Heart right ventricle (tissue), 16 donors: ENCODE measurements at regions of chr6 and their contacts with region 1.

Region 1: DNA sequence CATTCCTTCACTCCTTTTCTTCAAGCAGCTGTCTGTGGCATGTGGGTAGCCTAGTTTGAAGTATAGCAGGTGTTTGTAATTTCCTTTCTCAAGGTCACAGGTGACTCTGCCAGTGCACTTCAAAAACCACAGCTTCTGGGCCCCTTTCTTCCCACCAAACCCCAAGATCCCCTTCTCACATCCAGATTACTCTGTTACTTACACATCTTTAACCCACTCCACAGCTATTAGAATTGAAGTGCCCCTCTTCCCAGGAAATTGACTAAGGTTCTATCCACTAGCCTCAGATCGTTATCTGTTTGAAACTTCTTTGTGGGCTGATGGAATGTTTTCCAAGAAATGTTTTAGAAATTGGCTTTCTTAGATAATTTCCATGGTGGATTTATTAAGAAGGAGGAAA is 150.8 kb downstream of the AHI1 start:
- DNase-seq: no peak
- ATAC-seq: no peak
- H3K4me3 ChIP-seq: no peak overlapping the region
- H3K27ac ChIP-seq: no peak overlapping the region
- H3K4me1 ChIP-seq: no peaks in the 10 kb centered on the region
- H3K27me3 ChIP-seq: no peaks in the 10 kb centered on the region
- CTCF ChIP-seq: no peak

Region 2: GRCh38 chr6:134480593-134480992 is 866.2 kb before region 1 on chr6:
- intact Hi-C with region 1: no loop called
- DNase-seq: no peak
- ATAC-seq: peak in 2 of 8 donors; percentile 28 to 70
- H3K4me3 ChIP-seq: no peak overlapping the region
- H3K27ac ChIP-seq: peak overlapping the region in 1 of 10 donors; percentile 10
- H3K4me1 ChIP-seq: peaks cover 0 to 38% (median 16%) of the 10 kb centered on the region in 9 donors
- H3K27me3 ChIP-seq: no peaks in the 10 kb centered on the region
- CTCF ChIP-seq: no peak

Region 3: DNA sequence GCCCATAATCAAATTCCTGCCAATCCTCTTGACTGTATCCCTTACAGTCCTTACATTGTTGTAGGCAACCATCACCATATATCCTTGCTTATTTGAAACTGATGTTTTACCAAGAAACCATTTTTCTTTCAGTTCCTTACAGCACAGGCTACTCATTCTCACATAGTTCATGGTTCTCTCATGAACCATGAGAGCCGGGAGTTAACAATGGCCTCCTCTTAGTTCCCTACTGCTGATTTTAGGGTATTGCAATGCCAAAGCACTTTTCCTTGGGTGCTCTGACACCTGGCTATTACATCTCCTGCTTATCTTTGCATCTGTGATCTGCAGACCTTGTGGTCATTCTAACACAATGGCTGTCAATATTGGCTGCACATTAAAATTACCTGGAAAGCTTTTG is 32.2 kb before region 1 on chr6:
- intact Hi-C with region 1: loop called in 1 of 10 experiments (anchors 1 kb)
- DNase-seq: no peak
- ATAC-seq: no peak
- H3K4me3 ChIP-seq: no peak overlapping the region
- H3K27ac ChIP-seq: no peak overlapping the region
- H3K4me1 ChIP-seq: peaks cover 0 to 12% (median 0%) of the 10 kb centered on the region in 9 donors
- H3K27me3 ChIP-seq: no peaks in the 10 kb centered on the region
- CTCF ChIP-seq: no peak